PC-9 (cell line): ENCODE measurements at regions of chr1 and their contacts with region 1.

Region 1: DNA sequence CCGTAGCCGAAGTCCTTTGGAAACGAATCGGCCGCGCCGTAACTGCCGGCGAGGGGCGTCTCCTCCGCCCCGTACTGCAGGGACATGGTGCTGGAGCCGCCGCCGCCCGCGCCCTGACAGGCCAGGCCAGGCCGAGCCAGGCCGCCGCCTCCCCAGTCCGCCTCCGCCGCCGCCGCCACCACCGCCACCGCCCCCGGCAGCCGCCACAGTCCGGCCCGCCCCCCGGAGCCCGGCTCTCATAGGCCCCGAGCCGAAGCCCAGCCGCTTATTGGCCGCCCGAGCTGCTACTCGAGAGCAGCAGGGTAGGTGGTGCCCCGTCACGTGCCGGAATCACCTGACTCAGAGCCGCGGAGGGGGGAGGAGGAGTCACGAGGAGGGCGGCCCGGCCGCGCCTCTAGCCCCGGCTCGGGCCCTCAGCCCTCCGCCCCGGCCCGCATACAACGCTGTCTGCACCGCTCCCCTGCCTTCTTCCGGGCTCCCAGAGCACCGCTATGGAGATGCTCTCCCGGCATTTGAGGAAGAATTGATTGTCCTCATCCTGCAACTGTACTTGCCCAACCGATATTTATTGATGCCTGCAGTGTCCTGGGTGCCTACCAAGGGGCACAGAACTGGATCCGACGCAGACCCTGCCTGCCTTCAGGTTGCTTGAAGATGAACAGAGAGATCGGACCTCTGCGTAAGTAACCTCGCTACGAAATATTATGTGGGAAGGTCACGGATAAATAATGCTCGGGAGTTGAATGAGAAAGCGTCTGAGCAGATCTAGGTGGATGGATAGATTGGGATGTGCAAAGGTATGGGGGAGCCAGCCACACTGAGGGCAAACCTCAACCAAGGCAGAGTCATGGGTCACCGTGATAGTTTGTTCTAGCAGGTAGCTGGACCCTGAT is at the start of gene RRAGC:
- DNase-seq: peak; percentile 92 to 100
- H3K4me3 ChIP-seq: peak within 1 kb of the TSS; percentile 72
- H3K27ac ChIP-seq: peak within 1 kb of the TSS; percentile 59
- H3K4me1 ChIP-seq: peaks cover 23% of the 10 kb centered on the region
- H3K27me3 ChIP-seq: no peaks in the 10 kb centered on the region
- CTCF ChIP-seq: no peak
- total RNA-seq, gene RRAGC: 22.1 and 33.0 TPM in 2 replicates

Region 2: DNA sequence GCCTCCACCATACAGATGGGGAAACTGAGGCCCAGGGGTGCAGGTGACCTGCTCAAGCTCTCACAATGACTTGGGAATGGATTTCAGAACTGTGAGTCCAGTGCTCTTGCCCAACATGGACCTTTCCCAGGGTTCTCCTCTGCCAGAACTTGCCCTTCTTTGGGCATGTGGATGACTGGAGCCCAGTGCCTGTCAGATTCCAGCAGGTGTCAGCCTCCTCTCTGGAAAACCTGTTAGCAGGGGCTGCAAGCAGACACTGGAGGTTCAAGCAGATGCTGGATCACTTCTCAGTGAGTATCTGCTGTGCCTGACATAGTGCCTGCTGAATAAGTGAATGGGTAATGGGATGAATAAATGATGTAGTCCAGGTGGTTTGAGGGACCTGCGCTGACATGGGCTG is 499.0 kb before region 1 on chr1:
- CTCF ChIA-PET with region 1: no interaction called
- POLR2A ChIA-PET with region 1: no interaction called
- intact Hi-C with region 1: no loop called
- DNase-seq: no peak
- H3K4me3 ChIP-seq: no peak overlapping the region
- H3K27ac ChIP-seq: no peak overlapping the region
- H3K4me1 ChIP-seq: no peaks in the 10 kb centered on the region
- H3K27me3 ChIP-seq: peaks cover 27% of the 10 kb centered on the region
- CTCF ChIP-seq: no peak

Region 3: DNA sequence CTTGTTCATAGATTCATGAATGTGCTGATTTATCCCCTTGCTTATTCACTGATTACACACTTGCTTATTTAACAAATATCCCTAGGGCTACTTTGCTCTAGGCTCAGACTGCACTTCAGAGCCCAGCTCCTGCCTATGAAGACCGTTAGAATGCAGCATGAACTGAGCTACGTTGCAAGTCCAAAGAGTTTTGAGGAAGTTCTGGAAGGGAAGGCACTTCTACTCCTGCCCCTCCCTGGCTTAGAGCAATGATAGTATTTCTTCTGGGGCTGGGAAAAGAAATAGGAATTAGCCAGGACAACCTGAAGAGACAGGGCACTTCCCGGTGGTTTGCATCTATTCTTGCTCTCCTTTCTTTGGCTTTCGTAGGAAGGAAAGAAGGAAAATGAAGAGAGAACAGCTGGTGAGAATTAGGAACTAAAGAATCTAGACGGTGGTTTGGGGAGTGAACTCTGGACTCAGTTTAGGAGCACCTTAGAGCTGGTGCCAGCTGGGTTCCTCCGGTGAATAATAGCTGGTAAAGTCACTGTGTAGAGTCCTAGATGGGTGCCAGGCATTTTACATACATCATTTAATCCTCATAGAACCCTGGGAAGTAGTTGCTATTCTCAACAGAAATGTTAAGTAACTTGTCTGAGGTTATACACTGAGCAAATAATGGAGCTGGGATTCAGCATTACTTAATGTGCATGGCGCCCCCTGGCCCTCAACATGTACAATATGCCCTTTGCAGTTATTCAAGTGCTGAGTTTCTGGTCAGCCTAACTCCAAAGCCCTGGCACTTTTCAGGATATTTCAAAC is 232.2 kb after region 1 on chr1:
- CTCF ChIA-PET with region 1: no interaction called
- POLR2A ChIA-PET with region 1: no interaction called
- intact Hi-C with region 1: loop called (anchors 1 kb)
- DNase-seq: peak; percentile 70 to 71
- H3K4me3 ChIP-seq: no peak overlapping the region
- H3K27ac ChIP-seq: no peak overlapping the region
- H3K4me1 ChIP-seq: peaks cover 12% of the 10 kb centered on the region
- H3K27me3 ChIP-seq: no peaks in the 10 kb centered on the region
- CTCF ChIP-seq: peak; percentile 84